Activated CD4-positive, alpha-beta T cell treated with anti-CD3 and anti-CD28 coated beads for 36 hours (primary cell): ENCODE measurements at regions of chr10 and their contacts with region 1.

Region 1: DNA sequence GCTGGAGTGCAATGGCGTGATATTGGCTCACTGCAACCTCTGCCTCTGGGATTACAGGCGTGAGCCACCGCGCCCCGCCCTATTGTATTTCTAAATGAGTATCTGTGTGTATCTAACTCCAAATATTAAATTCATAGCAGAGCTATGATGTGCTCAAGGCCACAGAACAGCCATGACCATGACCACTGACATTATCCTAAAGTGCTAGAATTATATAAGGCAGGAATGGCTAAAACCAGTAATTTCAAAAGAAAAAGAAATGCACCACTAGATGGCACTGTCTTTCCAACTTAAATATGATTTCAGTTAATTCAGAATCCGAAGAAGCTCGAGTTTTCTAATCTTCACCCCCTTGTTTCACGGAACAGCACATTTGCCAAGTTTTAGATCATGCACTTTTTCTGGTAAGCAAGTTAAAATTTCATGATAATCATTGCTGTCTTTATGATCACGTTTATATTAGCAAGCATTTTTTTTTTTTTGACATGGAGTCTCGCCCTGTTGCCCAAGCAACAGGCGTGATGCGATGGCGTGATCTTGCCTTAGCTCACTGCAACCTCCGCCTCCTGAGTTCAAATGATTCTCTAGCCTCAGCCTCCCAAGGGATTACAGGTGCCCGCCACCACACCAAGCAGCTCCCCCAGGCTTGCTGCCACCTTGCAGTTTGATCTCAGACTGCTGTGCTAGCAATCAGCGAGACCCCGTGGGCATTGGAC is 65.3 kb downstream of the OR13A1 start:
- DNase-seq: no peak
- ATAC-seq: peak; percentile 26
- H3K4me3 Mint-ChIP-seq: peak overlapping the region; percentile 22
- H3K27ac Mint-ChIP-seq: no peak overlapping the region
- H3K4me1 Mint-ChIP-seq: peaks cover 2% of the 10 kb centered on the region
- H3K27me3 Mint-ChIP-seq: peaks cover 3% of the 10 kb centered on the region

Region 2: DNA sequence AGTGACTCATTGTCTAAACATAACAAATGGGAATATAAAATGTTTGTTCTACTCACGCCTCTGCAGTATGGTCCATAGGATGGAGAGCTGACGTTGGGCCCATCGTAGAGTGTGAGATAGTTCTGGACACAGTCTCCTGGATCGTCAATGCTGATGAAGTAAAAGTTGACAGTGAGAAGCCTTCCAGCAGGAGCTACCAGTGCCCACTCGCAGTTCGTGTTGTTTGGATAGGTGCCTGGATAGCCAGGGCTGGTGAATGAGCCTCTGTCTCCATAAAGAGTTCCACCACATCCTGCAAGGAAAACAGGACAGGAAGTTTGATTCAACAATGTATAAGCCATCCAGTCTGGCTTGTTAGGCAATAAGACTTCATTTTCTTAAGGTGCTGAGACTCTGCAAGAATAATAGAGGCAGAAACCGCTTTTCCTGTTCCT is 14.3 kb before region 1 on chr10:
- CTCF ChIA-PET with region 1: interaction called, 19 read pairs
- POLR2A ChIA-PET with region 1: no interaction called
- intact Hi-C with region 1: no loop called
- DNase-seq: no peak
- ATAC-seq: no peak
- H3K4me3 Mint-ChIP-seq: no peak overlapping the region
- H3K27ac Mint-ChIP-seq: no peak overlapping the region
- H3K4me1 Mint-ChIP-seq: peaks cover 7% of the 10 kb centered on the region
- H3K27me3 Mint-ChIP-seq: peaks cover 5% of the 10 kb centered on the region

Region 3: GRCh38 chr10:45383682-45384330 is 133.7 kb after region 1 on chr10:
- CTCF ChIA-PET with region 1: no interaction called
- POLR2A ChIA-PET with region 1: no interaction called
- intact Hi-C with region 1: no loop called
- DNase-seq: no peak
- ATAC-seq: no peak
- H3K4me3 Mint-ChIP-seq: no peak overlapping the region
- H3K27ac Mint-ChIP-seq: no peak overlapping the region
- H3K4me1 Mint-ChIP-seq: no peaks in the 10 kb centered on the region
- H3K27me3 Mint-ChIP-seq: peaks cover under 1% of the 10 kb centered on the region

Region 4: DNA sequence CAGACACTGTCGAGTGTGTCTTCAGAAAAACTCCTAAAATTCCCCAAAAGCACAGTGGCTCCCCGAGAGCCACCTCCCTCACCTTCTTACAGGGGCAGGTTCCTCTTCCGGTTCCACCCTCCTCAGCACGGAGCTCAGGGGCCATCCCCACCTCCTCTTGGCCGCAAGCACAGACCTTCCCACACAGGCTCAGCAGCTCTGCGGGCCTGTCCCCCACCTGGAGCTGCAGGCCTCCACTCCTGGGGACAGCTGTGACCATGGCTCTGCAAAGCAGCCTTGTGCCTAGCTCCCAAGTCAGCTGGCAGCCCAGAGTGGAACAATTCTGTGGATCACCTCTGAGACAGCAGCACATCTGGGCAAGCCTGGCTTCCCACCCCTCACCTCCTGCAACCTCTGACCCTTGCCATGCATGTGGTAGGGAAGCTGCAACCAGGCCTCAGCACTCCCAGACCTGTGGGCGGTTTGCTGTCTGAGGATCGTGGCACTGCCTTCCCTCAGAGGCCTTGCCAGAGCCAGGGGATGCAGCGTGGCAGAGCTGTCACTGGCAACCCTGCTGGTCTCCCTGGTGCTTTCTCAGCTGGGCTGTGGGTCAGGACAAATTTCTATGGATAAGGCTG is 203.6 kb after region 1 on chr10:
- CTCF ChIA-PET with region 1: no interaction called
- POLR2A ChIA-PET with region 1: no interaction called
- intact Hi-C with region 1: loop called in 1 of 2 experiments (anchors 10 kb)
- DNase-seq: no peak
- ATAC-seq: no peak
- H3K4me3 Mint-ChIP-seq: no peak overlapping the region
- H3K27ac Mint-ChIP-seq: no peak overlapping the region
- H3K4me1 Mint-ChIP-seq: no peaks in the 10 kb centered on the region
- H3K27me3 Mint-ChIP-seq: no peaks in the 10 kb centered on the region

Region 5: DNA sequence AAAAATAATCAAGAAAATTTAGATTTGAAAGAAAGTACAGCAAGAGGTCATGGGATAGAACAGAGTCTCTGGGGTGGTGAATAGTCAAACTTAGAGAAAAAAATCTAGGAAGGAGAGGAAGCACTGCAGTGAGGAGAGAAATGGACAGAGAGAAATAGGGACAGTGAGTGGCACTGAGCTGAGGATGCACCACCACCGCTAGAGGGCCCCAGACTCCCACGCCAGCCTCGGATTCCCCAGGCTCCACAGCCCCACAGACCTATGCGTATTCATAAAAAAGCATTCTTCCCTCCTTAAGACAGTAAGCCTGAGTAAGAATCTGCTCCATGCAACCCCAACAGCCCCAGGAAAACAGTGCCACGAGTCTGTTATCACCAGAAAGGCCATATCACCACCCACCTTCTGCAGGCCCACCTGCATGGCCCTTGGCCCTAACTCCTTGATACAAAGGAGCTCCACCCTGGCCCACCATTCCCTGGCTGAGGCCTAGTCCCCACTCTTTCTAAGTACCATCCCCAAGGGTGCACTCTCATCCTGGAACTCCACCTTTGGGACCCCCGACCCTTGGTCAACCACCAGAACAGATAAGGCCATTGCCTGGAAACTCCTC is 214.9 kb after region 1 on chr10:
- CTCF ChIA-PET with region 1: interaction called, 4 read pairs
- POLR2A ChIA-PET with region 1: no interaction called
- intact Hi-C with region 1: loop called in 1 of 2 experiments (anchors 2 kb)
- DNase-seq: peak; percentile 89
- ATAC-seq: peak; percentile 100
- H3K4me3 Mint-ChIP-seq: no peak overlapping the region
- H3K27ac Mint-ChIP-seq: no peak overlapping the region
- H3K4me1 Mint-ChIP-seq: peaks cover 11% of the 10 kb centered on the region
- H3K27me3 Mint-ChIP-seq: no peaks in the 10 kb centered on the region